ENCODE measurements at regions of chr11 and their contacts with region 1.

Region 1: DNA sequence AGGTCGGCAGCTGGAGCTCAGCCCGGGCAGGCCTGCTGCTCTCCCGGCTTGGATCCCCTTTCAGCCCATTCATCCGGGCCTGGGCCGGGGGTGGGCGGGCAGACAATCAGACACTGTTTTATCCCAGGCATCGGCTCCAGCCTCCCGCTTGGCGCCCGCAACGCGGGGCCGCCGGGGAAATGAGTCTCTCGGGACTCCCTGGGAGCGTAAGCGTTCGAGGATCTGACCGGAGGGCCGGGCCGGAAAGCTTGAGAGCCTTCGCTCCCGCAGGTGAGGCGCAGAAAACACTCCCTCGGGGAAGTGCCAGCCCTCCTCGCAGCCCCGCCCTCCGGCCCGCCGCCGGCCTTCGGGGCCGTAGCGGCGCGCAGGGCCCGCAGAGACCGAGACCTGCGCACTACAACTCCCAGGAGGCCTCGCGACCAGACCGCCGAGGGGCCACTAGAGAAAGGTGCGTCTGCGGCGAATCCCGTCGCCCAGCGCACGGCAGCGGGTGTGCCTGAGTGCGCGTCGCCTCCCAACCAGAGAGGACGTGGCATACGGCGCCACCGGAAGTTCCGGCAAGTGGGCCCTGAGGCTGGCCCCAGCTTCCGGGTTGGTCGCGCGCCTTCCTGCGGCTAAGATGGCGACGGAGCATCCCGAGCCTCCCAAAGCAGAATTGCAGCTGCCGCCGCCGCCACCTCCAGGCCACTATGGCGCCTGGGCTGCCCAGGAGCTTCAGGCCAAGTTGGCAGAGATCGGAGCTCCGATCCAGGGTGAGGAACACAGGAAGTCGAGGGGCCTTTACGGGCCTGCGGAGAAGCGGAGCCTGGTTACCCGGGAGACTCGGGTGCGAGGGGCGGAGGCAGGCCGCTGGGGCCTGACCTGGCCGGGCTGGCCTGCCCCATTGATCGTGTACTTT is at the start of gene SF3B2:
- DNase-seq: peak; percentile 88 to 99 (median 94)
- ATAC-seq: peak; percentile 95
- H3K4me3 ChIP-seq: peak within 1 kb of the TSS; percentile 100
- H3K4me3 Mint-ChIP-seq: peak within 1 kb of the TSS; percentile 100
- H3K27ac ChIP-seq: peak within 1 kb of the TSS; percentile 66 to 90
- H3K27ac Mint-ChIP-seq: peak within 1 kb of the TSS; percentile 97
- H3K4me1 ChIP-seq: peaks cover 43% of the 10 kb centered on the region
- H3K4me1 Mint-ChIP-seq: peaks cover 37% of the 10 kb centered on the region
- H3K27me3 ChIP-seq: no peaks in the 10 kb centered on the region
- H3K27me3 Mint-ChIP-seq: peaks cover 5% of the 10 kb centered on the region
- CTCF ChIP-seq: no peak
- total RNA-seq, gene SF3B2: 182 to 196 TPM

Region 2: GRCh38 chr11:65685981-65686380 is 366.0 kb before region 1 on chr11:
- CTCF ChIA-PET with region 1: no interaction called
- POLR2A ChIA-PET with region 1: no interaction called
- intact Hi-C with region 1: no loop called
- DNase-seq: no peak
- ATAC-seq: no peak
- H3K4me3 ChIP-seq: no peak overlapping the region
- H3K4me3 Mint-ChIP-seq: no peak overlapping the region
- H3K27ac ChIP-seq: no peak overlapping the region
- H3K27ac Mint-ChIP-seq: no peak overlapping the region
- H3K4me1 ChIP-seq: no peaks in the 10 kb centered on the region
- H3K4me1 Mint-ChIP-seq: no peaks in the 10 kb centered on the region
- H3K27me3 ChIP-seq: no peaks in the 10 kb centered on the region
- H3K27me3 Mint-ChIP-seq: peaks cover 5% of the 10 kb centered on the region
- CTCF ChIP-seq: no peak

Region 3: DNA sequence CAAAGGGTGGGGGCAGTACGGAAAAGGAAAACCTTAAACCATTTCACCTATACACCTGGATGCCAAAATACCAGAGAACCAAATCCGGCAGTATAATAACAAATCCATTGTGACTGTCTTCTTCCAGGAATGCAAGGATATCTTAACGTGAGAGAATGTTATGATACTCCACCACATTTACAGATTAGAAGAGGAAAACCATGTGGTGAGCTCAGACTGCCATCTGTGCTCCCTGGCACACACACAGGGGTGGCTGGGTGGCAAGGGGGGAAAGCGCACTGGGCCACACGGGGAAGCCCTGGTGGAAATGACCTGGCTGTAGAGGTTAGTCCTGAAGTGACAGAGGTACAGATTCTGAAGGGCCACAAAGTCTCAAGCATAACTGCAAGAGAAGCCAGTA is 60.0 kb before region 1 on chr11:
- CTCF ChIA-PET with region 1: no interaction called
- POLR2A ChIA-PET with region 1: no interaction called
- intact Hi-C with region 1: no loop called
- DNase-seq: no peak
- ATAC-seq: no peak
- H3K4me3 ChIP-seq: no peak overlapping the region
- H3K4me3 Mint-ChIP-seq: no peak overlapping the region
- H3K27ac ChIP-seq: no peak overlapping the region
- H3K27ac Mint-ChIP-seq: no peak overlapping the region
- H3K4me1 ChIP-seq: peaks cover 10% of the 10 kb centered on the region
- H3K4me1 Mint-ChIP-seq: peaks cover 6% of the 10 kb centered on the region
- H3K27me3 ChIP-seq: no peaks in the 10 kb centered on the region
- H3K27me3 Mint-ChIP-seq: no peaks in the 10 kb centered on the region
- CTCF ChIP-seq: no peak

Region 4: DNA sequence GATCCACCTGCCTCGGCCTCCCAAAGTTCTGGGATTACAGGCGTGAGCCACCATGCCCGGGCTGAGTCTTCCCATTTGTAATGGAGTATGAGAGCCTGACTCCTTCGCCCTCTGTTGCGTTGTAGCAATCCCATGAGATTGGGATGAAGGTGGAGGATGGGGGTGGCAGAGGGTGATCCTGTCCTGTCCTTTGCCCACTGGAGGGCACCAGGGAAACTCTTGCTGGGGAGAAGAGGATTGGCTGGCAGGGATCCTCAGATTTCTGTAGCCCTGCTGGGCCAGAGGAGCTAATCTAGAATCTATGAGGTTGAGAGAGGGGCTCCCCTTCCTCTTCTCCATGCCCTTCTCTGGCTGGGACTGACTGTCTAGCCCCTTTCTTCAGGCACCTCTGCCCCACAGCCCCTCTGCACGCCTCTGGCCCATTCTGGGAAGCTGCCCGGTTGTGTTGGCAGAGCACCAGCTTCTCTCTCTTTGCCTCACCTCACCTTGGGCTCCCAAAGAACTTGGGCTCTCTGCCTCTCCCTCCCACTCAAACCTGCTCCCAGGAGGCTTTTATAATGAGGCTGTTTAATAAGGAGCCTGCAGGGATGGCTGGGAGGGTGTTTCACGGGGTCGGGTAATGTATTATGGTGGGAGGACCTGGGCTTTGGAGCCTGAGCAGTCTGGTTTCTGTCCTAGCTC is 16.2 kb before region 1 on chr11:
- CTCF ChIA-PET with region 1: no interaction called
- POLR2A ChIA-PET with region 1: no interaction called
- intact Hi-C with region 1: no loop called
- DNase-seq: no peak
- ATAC-seq: no peak
- H3K4me3 ChIP-seq: no peak overlapping the region
- H3K4me3 Mint-ChIP-seq: no peak overlapping the region
- H3K27ac ChIP-seq: no peak overlapping the region
- H3K27ac Mint-ChIP-seq: no peak overlapping the region
- H3K4me1 ChIP-seq: no peaks in the 10 kb centered on the region
- H3K4me1 Mint-ChIP-seq: no peaks in the 10 kb centered on the region
- H3K27me3 ChIP-seq: peaks cover 0 to 6% of the 10 kb centered on the region in 2 experiments
- H3K27me3 Mint-ChIP-seq: peaks cover 6% of the 10 kb centered on the region
- CTCF ChIP-seq: no peak

Region 5: GRCh38 chr11:66268283-66268951 is 216.4 kb after region 1 on chr11 and contains the start of gene RAB1B:
- CTCF ChIA-PET with region 1: no interaction called
- POLR2A ChIA-PET with region 1: interaction called, 3 read pairs
- intact Hi-C with region 1: loop called in 1 of 2 experiments (anchors 5 kb)
- DNase-seq: peak; percentile 99 to 100 (median 100)
- ATAC-seq: peak; percentile 82
- H3K4me3 ChIP-seq: peak within 1 kb of the TSS; percentile 99
- H3K4me3 Mint-ChIP-seq: peak within 1 kb of the TSS; percentile 96
- H3K27ac ChIP-seq: peak within 1 kb of the TSS; percentile 83 to 87
- H3K27ac Mint-ChIP-seq: peak within 1 kb of the TSS; percentile 100
- H3K4me1 ChIP-seq: peaks cover 58% of the 10 kb centered on the region
- H3K4me1 Mint-ChIP-seq: peaks cover 45% of the 10 kb centered on the region
- H3K27me3 ChIP-seq: no peaks in the 10 kb centered on the region
- H3K27me3 Mint-ChIP-seq: no peaks in the 10 kb centered on the region
- CTCF ChIP-seq: no peak
- total RNA-seq, gene RAB1B: 27.4 to 29.4 TPM

Measured in CD4-positive, alpha-beta T cell (primary cell).